Activated CD4-positive, alpha-beta memory T cell treated with anti-CD3 and anti-CD28 coated beads for 36 hours (primary cell): ENCODE measurements at regions of chr2 and their contacts with region 1.

Region 1: GRCh38 chr2:102258386-102259074 is 52.8 kb upstream of the IL1RL1 start:
- DNase-seq: peak; percentile 64
- H3K4me3 Mint-ChIP-seq: no peak overlapping the region
- H3K27ac Mint-ChIP-seq: peak overlapping the region; percentile 96
- H3K4me1 Mint-ChIP-seq: peaks cover 45% of the 10 kb centered on the region
- H3K27me3 Mint-ChIP-seq: no peaks in the 10 kb centered on the region

Region 2: DNA sequence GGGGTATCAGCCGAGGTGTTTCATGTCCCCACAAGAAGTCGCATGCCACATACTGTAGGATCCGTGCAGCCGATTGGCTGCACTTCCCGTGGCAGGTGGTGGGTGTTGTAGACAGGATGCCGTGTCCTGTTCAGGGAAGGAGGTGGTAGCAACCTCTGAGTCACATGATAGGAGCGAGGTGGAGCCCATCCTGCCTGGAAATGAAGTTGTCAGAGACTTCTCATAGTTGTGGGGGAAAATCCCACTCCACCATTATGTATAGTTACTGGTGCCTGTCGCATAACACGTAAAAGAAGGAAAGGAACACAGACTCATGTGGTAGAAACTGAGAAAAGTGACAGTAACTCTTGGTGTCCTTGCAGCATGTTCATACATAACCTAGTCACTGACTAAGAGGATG is 358.2 kb before region 1 on chr2:
- CTCF ChIA-PET with region 1: interaction called, 3 read pairs
- POLR2A ChIA-PET with region 1: no interaction called
- intact Hi-C with region 1: loop called (anchors 2 kb)
- DNase-seq: peak; percentile 88
- H3K4me3 Mint-ChIP-seq: peak overlapping the region; percentile 56
- H3K27ac Mint-ChIP-seq: peak overlapping the region; percentile 93
- H3K4me1 Mint-ChIP-seq: peaks cover 40% of the 10 kb centered on the region
- H3K27me3 Mint-ChIP-seq: peaks cover 15% of the 10 kb centered on the region

Region 3: GRCh38 chr2:102235491-102235890 is 23.0 kb before region 1 on chr2:
- CTCF ChIA-PET with region 1: interaction called, 64 read pairs
- POLR2A ChIA-PET with region 1: no interaction called
- intact Hi-C with region 1: loop called (anchors 1 kb)
- DNase-seq: peak; percentile 56
- H3K4me3 Mint-ChIP-seq: no peak overlapping the region
- H3K27ac Mint-ChIP-seq: peak overlapping the region; percentile 61
- H3K4me1 Mint-ChIP-seq: peaks cover 58% of the 10 kb centered on the region
- H3K27me3 Mint-ChIP-seq: peaks cover 2% of the 10 kb centered on the region

Region 4: DNA sequence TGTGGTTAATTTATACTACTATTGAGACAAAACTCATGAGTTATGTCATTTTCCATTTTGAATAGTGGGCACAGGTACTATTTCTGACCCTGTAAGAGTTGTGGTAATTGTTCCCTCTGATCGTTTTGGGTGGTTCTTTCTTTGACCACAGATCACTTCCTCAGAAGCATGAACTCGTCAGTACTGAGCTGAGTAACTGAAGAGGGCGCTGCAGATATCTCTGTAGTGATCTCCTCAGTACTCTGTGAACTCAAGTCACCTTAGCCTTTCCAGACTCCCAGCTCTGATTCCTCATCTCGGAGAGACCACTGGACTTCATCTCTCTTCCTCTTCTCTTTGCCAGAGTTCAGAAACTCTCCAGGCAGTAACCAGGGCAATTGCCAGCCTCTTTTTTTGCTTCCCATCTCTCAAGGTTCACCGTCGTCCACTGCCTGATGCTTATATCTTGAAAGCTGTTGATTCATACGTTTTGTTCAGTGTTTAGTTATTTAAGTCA is 43.4 kb after region 1 on chr2:
- CTCF ChIA-PET with region 1: interaction called, 5 read pairs
- POLR2A ChIA-PET with region 1: interaction called, 4 read pairs
- intact Hi-C with region 1: loop called (anchors 1 kb)
- DNase-seq: peak; percentile 65
- H3K4me3 Mint-ChIP-seq: peak overlapping the region; percentile 4
- H3K27ac Mint-ChIP-seq: peak overlapping the region; percentile 55
- H3K4me1 Mint-ChIP-seq: peaks cover 45% of the 10 kb centered on the region
- H3K27me3 Mint-ChIP-seq: peaks cover 4% of the 10 kb centered on the region

Region 5: DNA sequence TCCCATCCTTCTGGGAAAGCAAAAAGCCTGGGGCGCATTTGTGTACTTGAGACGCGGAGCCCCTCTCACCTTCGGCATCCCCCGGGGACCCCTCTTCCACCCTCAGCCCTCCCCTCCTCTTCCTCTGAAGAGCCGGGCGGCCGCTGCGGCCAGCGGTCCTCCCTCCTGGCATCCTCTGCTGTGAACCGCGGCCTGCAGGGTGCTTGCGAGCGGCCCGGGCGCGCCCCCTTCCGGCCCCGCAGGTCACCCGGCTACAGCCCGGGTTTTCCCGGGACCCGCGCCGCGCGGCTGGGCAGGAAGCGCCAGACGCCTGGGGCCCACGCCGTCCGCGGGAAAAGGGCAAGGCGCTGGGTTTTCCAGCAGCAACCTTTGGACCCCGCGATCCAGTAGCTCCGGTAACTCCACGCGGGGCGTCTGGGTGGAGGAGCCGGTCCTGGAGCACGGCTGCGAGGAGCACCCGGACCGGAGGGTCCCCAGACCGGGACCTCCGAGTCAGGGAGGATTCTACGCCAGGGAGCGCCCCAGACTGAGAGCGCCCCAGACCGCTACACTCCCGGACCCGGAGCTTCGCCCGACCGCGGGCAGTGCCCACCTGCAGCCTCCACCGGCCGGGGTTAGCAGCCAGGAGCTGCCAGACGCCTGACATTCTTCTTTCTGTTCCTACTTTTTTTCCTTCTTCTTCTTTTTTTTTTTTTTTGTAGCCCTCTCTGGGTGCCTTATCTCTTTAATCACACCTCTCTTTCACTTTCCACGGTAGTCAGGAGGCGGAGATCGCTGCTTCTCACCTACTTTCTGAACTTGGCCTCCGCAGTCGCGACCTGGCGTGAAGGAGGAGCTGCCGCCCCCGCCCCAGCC is 97.2 kb after region 1 on chr2 and contains the start of gene IL18R1:
- CTCF ChIA-PET with region 1: interaction called, 7 read pairs
- POLR2A ChIA-PET with region 1: interaction called, 5 read pairs
- intact Hi-C with region 1: loop called (anchors 1 kb)
- DNase-seq: peak; percentile 81
- H3K4me3 Mint-ChIP-seq: peak within 1 kb of the TSS; percentile 97
- H3K27ac Mint-ChIP-seq: peak within 1 kb of the TSS; percentile 89
- H3K4me1 Mint-ChIP-seq: peaks cover 45% of the 10 kb centered on the region
- H3K27me3 Mint-ChIP-seq: no peaks in the 10 kb centered on the region
- total RNA-seq, gene IL18R1: 25.5 to 26.6 TPM

Region 6: DNA sequence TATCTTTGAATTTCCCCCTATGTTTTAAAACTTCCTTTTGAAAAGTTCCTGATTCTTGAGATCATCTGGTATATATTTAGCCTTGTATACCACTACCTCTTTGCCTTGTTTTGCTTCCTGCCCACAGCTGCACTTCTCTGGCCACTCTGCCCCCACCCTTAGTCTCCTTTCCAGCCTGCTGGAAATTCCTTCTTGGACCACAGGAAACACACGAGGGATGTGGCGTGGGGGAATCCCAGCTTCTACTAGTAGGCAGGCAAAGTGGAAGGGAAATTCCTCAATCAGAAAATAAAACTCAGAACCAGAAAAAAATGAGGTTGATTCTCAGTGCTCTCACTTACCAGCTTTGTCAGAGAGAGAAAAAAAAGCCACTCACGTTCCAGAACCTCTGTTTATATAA is 177.8 kb after region 1 on chr2:
- CTCF ChIA-PET with region 1: interaction called, 3 read pairs
- POLR2A ChIA-PET with region 1: no interaction called
- intact Hi-C with region 1: loop called (anchors 2 kb)
- DNase-seq: peak; percentile 54
- H3K4me3 Mint-ChIP-seq: no peak overlapping the region
- H3K27ac Mint-ChIP-seq: peak overlapping the region; percentile 34
- H3K4me1 Mint-ChIP-seq: peaks cover 30% of the 10 kb centered on the region
- H3K27me3 Mint-ChIP-seq: no peaks in the 10 kb centered on the region